Activated CD8-positive, alpha-beta T cell treated with anti-CD3 and anti-CD28 coated beads, Interleukin-2, amount 10 ng/mL, durations not matched to agents 7 days and 5 days (primary cell): ENCODE measurements at regions of chr7 and their contacts with region 1.

Region 1: GRCh38 chr7:1103009-1103788 is 15.3 kb downstream of the GPER1 start:
- DNase-seq: peak; percentile 24
- ATAC-seq: peak; percentile 46
- H3K4me3 Mint-ChIP-seq: peak overlapping the region; percentile 31
- H3K27ac Mint-ChIP-seq: peak overlapping the region; percentile 72
- H3K4me1 Mint-ChIP-seq: peaks cover 27% of the 10 kb centered on the region
- H3K27me3 Mint-ChIP-seq: no peaks in the 10 kb centered on the region

Region 2: DNA sequence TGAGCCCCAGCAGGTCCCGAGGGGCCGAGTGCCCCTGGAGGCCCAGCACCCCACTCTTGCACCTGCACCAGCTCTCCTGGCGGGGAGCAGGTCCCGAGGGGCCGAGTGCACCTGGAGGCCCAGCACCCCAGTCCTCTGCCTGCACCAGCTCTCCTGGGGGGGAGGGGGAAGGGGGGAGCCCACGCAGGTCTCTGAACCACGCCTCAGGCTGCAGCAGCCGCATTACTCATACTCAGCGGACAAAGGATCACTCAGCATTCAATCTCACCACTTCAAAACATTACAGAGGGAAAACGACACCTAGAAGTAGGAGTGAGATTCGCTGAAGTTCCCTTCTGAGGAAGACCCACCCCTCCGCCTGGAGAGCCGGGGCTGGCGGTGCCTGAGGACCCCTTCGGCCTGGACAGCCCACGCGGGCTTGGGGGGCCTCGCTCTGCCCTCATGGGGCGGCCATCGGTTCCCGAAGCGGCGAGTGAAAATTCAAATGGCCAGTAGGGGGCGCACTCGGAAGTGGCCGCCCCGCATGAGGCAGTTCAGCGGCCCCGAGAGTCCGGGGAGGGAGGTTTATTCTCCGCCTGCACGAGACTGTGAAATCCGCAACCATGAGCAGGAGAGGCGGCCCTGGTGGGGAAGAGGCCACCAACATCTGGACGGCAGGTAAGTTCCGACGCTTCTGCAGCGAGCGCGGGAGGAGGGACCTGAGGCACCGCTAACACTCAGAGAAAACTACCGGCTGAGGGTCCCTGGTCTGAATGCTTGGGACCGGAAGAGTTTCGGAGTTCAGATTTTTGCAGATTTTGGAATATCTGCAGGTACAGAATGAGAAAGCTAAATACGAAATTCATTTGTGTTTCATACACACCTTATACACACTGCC is 16.4 kb before region 1 on chr7:
- CTCF ChIA-PET with region 1: interaction called, 19 read pairs
- POLR2A ChIA-PET with region 1: no interaction called
- DNase-seq: peak; percentile 82
- ATAC-seq: peak; percentile 93
- H3K4me3 Mint-ChIP-seq: peak overlapping the region; percentile 65
- H3K27ac Mint-ChIP-seq: no peak overlapping the region
- H3K4me1 Mint-ChIP-seq: peaks cover 12% of the 10 kb centered on the region
- H3K27me3 Mint-ChIP-seq: no peaks in the 10 kb centered on the region

Region 3: DNA sequence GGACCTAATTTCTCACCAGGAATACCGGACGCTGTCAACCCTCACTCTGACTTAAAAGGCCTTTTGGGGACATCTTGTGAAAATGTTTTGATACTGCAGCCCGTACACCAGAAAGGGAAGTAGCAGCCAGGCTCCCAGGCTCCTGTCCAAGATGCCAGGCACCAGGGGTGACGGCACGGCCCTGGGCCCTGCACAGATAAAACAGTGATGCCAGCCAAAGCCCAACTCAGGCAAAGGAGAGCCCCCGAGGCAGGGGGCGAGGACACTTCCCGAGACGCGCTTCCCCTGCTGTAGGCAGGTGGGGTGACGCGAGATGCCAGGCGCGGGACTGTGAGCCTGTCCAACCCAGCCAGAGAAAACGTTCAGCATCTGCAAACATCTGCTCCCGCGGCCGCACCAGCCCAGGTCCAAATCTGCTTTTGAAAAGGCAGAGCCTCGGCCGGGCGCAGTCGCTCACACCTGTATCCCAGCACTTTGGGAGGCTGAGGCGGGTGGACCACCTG is 41.1 kb after region 1 on chr7:
- CTCF ChIA-PET with region 1: no interaction called
- POLR2A ChIA-PET with region 1: no interaction called
- DNase-seq: no peak
- ATAC-seq: no peak
- H3K4me3 Mint-ChIP-seq: no peak overlapping the region
- H3K27ac Mint-ChIP-seq: no peak overlapping the region
- H3K4me1 Mint-ChIP-seq: no peaks in the 10 kb centered on the region
- H3K27me3 Mint-ChIP-seq: no peaks in the 10 kb centered on the region